ENCODE measurements at regions of chr3 and their contacts with region 1.

Region 1: DNA sequence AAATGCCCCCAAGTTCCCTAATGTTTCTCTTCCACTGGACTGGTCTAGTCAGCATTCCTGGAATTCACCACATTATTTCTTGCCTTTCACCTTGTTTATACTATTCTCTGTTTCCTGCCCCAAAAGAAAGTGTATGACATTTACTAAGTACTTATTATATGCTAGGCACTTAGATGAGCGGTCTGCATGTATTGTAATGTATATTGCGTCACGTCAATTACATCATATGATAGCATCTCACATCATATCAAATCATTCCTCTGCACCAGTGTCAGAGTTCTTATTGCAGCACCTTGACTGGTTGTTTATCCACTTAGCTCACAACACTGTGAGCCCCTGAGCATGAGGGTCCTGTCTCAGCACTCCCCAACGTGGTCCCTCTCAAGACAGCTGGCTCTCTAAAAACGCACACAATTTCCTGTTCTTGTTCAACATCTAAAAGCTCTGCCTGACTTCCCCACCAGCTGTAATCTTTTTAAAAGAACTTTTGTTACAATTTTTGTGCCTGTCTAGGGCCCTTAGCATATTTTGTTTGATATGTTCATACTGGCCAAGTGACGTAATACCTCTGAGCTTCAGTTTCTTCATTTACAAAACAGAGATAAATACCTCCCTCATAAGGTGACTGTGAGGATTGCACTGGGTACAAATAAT is 58.8 kb downstream of the ARHGAP31 start:
- DNase-seq: peak in 1 of 4 experiments; percentile 41
- ATAC-seq: peak; percentile 89
- H3K4me3 ChIP-seq: no peak overlapping the region
- H3K27ac ChIP-seq: no peak overlapping the region
- H3K4me1 ChIP-seq: peaks cover 0 to 7% of the 10 kb centered on the region in 2 experiments; a peak in 4 of 5 replicates
- H3K27me3 ChIP-seq: no peaks in the 10 kb centered on the region; a peak in 1 of 5 replicates
- CTCF ChIP-seq: peak; percentile 28 to 51 (median 30); a peak in 4 of 6 replicates
- EP300 ChIP-seq: no peak
- POLR2A ChIP-seq: no peak
- RAD21 ChIP-seq: peak; percentile 34 to 68; a peak in 3 of 4 replicates

Region 2: GRCh38 chr3:119145500-119146191 is 207.3 kb before region 1 on chr3 and contains the start of gene TEX55:
- CTCF ChIA-PET with region 1: interaction called, 4 read pairs
- POLR2A ChIA-PET with region 1: no interaction called
- in situ Hi-C with region 1: no loop called
- intact Hi-C with region 1: loop called (anchors 1 kb)
- DNase-seq: peak in 3 of 4 experiments; percentile 10 to 44 (median 36)
- ATAC-seq: peak; percentile 89
- H3K4me3 ChIP-seq: no peak within 1 kb of the TSS
- H3K27ac ChIP-seq: no peak within 1 kb of the TSS
- H3K4me1 ChIP-seq: peaks cover 0 to 6% of the 10 kb centered on the region in 2 experiments; a peak in 2 of 5 replicates
- H3K27me3 ChIP-seq: no peaks in the 10 kb centered on the region
- CTCF ChIP-seq: peak; percentile 51 to 66 (median 60)
- EP300 ChIP-seq: no peak
- POLR2A ChIP-seq: no peak
- RAD21 ChIP-seq: peak; percentile 48 to 77
- polyA plus RNA-seq, gene TEX55: not detected

Region 3: GRCh38 chr3:119279101-119279554 is 73.8 kb before region 1 on chr3:
- CTCF ChIA-PET with region 1: no interaction called
- POLR2A ChIA-PET with region 1: no interaction called
- in situ Hi-C with region 1: no loop called
- intact Hi-C with region 1: loop called (anchors 2 kb)
- DNase-seq: no peak
- ATAC-seq: no peak
- H3K4me3 ChIP-seq: no peak overlapping the region
- H3K27ac ChIP-seq: no peak overlapping the region
- H3K4me1 ChIP-seq: no peaks in the 10 kb centered on the region
- H3K27me3 ChIP-seq: peaks cover 0 to 5% of the 10 kb centered on the region in 2 experiments; a peak in 3 of 5 replicates
- CTCF ChIP-seq: no peak
- EP300 ChIP-seq: no peak
- POLR2A ChIP-seq: no peak
- RAD21 ChIP-seq: no peak

Region 4: DNA sequence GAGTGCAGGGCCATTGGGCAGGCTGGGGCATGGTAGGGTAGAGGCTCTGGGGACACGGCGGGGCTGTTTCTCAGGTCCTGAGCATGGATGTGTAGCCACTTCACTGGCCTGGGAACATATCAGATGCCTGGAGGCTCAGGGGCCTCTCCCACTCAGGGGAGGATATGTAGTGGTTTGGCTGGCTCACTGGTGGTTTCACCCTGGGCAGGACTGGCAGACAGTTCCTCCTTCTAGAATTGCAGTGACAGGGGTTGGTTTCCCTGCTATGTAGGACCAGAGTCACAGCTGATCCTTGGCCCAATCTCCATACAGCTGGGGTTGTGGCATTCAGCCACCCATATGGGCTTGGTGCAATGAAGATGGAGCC is 63.6 kb before region 1 on chr3:
- CTCF ChIA-PET with region 1: no interaction called
- POLR2A ChIA-PET with region 1: no interaction called
- in situ Hi-C with region 1: no loop called
- intact Hi-C with region 1: no loop called
- DNase-seq: no peak
- ATAC-seq: no peak
- H3K4me3 ChIP-seq: no peak overlapping the region
- H3K27ac ChIP-seq: no peak overlapping the region
- H3K4me1 ChIP-seq: peaks cover 0 to 7% of the 10 kb centered on the region in 2 experiments; a peak in 2 of 5 replicates
- H3K27me3 ChIP-seq: no peaks in the 10 kb centered on the region; a peak in 1 of 5 replicates
- CTCF ChIP-seq: no peak
- EP300 ChIP-seq: no peak
- POLR2A ChIP-seq: no peak
- RAD21 ChIP-seq: no peak